Thyroid gland (tissue), 4 donors: ENCODE measurements at regions of chr3 and their contacts with region 1.

Region 1: DNA sequence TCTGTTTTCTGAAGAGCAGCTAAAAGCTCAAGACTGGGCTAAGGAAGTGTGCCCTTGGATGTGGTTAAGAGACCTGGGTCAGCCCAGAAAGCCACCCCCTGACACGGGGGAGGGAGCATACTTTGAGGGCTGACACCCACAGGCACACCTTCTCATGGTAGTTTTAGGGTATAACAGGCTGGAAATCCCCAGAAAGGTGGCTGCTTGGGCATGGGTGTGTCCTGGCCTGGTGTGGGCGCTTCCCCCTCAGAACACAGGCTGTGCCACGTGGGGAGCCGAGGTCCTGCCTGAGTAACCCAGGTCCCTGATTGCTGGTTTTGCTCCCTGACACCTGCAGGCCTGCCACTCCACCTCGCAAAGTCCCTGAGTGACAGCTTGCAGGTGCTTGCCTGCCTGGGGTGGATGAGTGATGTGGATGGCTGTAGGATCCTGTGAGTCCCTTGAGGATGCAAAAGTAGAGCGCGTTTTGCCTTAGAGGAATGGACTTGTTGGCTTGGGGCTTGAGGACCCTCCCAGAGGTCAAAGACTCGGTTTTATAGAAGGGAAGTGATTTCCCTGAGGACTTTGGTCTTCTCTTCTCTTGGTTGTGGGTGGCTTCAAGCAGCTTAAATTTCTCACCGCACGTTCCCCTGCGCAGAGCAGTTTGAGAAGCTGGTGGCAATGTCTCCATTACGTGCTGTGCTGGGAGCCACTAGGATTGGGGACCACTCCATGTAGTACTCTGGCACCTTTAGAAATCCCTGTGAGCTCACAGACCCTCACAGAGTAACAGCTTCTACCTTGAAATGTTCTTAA is 94.4 kb downstream of the DNASE1L3 start:
- DNase-seq: peak; percentile 56 to 69
- H3K4me3 ChIP-seq: no peak overlapping the region
- H3K27ac ChIP-seq: peak overlapping the region; percentile 83 to 92 (median 87)
- H3K4me1 ChIP-seq: peaks cover 46 to 67% of the 10 kb centered on the region in 2 donors
- H3K27me3 ChIP-seq: no peaks in the 10 kb centered on the region
- CTCF ChIP-seq: no peak
- POLR2A ChIP-seq: no peak

Region 2: DNA sequence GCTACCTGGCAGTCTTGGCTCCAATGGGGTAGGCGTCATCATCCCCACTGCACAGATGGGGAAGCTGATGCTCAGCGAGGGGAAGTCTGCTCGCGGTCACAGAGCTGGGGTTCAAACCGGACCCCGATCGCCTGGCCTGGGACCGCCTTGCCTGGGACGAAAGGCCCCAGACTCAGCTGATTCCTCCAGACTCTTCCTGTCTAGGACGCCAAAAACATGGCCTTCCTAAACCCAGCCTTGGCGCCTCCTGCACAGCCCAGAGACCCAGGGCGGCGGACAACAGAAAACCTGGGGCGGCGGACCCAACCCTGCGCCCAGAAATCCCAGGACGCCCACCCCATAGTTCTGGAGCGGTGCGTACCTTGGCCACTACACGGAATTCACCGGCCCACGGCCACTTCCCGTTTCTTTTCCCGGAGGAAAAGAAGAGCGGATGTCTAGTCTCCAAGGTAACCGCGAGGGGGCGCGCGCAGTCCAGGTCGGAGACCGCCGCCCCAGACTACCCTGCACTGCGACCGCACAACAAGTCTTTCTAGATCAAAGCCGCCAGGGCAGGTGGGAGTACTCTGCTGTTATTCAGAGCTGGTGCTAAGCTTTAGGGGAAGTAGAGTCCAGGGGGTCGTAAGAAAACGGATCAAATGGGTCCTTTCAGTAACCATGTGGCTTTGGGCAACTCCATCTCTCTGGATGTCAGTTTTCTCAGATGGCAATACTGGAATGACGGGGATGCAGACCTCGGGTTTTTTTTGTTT is 946.3 kb before region 1 on chr3:
- intact Hi-C with region 1: no loop called
- DNase-seq: peak; percentile 66 to 81
- H3K4me3 ChIP-seq: peak overlapping the region in 1 of 3 donors; percentile 41
- H3K27ac ChIP-seq: no peak overlapping the region
- H3K4me1 ChIP-seq: peaks cover 0 to 6% of the 10 kb centered on the region in 2 donors
- H3K27me3 ChIP-seq: no peaks in the 10 kb centered on the region
- CTCF ChIP-seq: peak; percentile 67 to 90 (median 78)
- POLR2A ChIP-seq: no peak

Region 3: DNA sequence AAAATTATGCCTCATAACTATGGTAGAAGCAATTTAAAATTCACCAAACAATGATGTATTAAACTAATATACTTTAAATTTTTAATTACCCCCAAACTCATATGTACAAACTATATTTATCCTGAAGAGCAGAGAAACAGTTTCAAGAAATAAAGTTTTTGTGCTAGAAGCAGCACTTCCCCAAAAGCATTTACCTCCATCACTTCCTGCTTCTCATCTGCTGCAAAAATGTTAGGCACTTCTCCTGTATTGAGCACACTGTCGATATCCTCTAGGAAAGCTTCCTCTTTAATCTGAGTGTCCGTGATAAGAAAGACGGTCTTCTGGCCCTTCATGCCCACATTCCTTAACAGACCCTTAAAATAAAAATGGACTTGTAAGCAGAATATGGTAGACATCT is 722.4 kb before region 1 on chr3:
- intact Hi-C with region 1: no loop called
- DNase-seq: no peak
- H3K4me3 ChIP-seq: no peak overlapping the region
- H3K27ac ChIP-seq: no peak overlapping the region
- H3K4me1 ChIP-seq: no peaks in the 10 kb centered on the region
- H3K27me3 ChIP-seq: no peaks in the 10 kb centered on the region
- CTCF ChIP-seq: no peak
- POLR2A ChIP-seq: no peak

Region 4: DNA sequence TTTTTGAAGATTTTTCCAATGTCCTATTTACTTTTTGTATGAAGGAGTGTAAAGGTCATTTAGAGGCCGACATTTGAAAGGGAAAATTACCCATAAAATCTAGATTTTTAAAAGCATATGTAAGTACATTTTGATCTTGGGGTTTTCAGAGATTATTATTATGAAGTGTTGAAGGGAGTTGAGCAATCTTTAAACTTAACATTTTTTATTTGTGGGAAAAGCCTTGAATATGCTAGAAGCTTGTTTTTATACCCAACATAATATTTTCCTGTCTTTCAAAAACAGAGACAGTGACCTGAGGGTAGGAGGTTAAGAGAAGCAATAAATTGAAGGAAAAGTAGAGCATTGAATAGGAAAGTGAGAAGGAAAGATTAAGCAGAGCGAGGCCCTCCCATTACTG is 274.5 kb before region 1 on chr3:
- intact Hi-C with region 1: no loop called
- DNase-seq: no peak
- H3K4me3 ChIP-seq: no peak overlapping the region
- H3K27ac ChIP-seq: no peak overlapping the region
- H3K4me1 ChIP-seq: no peaks in the 10 kb centered on the region
- H3K27me3 ChIP-seq: no peaks in the 10 kb centered on the region
- CTCF ChIP-seq: no peak
- POLR2A ChIP-seq: no peak

Region 5: DNA sequence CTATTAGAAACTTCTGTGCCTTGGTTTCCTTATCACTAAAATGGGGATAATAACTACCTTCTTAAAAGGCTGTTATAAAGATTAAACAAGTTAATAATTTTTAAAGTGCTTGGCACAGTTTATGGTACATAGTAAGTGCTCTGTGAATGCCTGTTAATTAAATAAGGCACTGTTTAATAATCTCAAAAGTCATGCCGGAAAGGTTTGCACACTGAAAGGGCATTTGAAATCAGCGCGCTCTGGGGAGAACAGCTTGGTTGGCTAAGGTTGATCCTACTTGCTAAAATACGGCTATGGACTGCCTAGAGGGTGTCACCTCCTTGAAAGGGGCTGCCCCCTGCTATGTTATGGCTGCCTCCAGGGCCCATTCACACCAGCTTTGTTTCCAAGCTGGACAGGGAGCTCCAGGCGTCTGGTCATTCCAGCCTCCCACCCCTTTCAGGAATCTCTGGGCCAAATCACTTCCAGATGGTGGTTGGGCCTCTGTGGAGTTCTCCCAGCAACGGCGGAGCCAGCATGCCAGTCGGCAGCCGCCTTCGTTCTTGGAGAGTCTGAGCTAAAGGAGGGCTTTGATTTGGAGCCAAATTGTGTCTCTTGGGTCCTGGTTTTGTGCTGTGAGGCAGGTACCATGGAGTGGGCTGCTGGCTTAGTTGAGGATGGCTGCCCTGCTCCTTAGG is 102.2 kb before region 1 on chr3:
- intact Hi-C with region 1: loop called (anchors 10 kb)
- DNase-seq: peak; percentile 66 to 73
- H3K4me3 ChIP-seq: no peak overlapping the region
- H3K27ac ChIP-seq: peak overlapping the region; percentile 81 to 97 (median 91)
- H3K4me1 ChIP-seq: peaks cover 73 to 79% of the 10 kb centered on the region in 2 donors
- H3K27me3 ChIP-seq: no peaks in the 10 kb centered on the region
- CTCF ChIP-seq: no peak
- POLR2A ChIP-seq: no peak

Region 6: DNA sequence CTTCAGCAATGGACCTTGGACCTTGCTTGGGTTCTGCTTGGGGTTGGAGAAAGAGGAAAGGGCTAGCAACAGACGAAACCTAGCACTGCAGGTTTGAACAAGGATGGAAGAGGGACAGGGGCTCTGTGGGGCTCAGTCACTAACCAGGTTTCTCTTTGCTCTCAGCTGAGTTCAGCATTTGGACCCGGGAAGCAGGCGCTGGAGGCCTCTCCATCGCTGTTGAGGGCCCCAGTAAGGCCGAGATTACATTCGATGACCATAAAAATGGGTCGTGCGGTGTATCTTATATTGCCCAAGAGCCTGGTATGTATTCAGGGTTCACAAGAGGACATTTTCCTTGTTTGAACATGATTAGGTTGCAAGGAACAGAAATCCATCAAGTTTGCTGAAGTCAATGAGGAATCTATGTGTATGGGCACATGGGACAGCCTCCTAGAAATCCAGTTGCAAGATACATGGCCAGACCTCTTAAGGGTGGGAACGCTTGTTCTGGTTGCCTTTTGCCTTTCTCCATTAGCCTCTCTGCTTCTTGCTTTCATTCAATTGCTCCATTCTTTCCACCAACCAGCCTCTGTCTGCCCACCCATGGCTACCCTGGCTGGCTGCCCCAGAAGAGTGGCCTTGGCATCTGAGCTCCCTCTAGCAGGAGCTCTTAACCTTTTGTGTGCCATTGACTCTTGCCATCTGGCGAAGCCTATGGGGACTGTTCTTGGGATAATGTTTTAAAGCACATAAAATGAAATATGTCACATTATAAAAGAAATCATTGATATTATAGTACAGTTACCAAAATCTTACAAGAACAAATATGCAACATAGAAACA is 38.5 kb after region 1 on chr3:
- intact Hi-C with region 1: loop called (anchors 5 kb)
- DNase-seq: peak; percentile 70 to 83
- H3K4me3 ChIP-seq: no peak overlapping the region
- H3K27ac ChIP-seq: peak overlapping the region in 1 of 3 donors; percentile 57
- H3K4me1 ChIP-seq: peaks cover 20 to 28% of the 10 kb centered on the region in 2 donors
- H3K27me3 ChIP-seq: no peaks in the 10 kb centered on the region
- CTCF ChIP-seq: no peak
- POLR2A ChIP-seq: no peak